Right cardiac atrium (tissue), 5 donors: ENCODE measurements at regions of chr12 and their contacts with region 1.

Region 1: DNA sequence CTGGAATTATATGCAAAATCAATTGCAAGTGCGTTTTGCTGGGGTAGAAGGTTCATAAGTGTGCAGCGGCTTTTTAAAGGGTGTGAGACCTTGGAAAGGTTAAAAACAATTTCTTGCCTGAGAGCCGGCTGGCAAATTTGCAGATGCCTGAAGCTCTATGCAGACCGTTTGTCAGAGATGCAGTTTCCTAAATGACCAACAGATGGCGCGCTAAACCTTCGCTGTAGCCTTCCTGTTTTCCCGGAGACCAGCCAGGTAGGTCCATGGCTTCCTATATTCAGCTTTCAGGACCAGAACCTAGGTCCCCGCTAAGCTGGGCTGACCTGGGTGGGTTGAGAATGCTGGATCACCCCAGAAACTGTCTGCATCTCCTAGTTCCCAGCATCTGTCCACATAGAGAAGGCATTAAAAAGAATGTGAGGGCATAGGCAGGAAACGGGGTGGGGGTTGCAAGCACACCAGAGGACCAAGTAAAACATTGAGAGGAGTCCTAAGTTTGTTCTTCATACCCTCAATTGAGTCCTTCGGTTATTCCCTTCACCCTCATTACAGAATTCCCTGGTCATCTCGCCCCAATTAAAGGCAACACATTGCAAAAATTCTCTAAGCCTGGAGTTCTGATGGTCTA is 5.7 kb upstream of the NOS1 start:
- DNase-seq: peak; percentile 44 to 74 (median 57)
- ATAC-seq: peak; percentile 59 to 71
- H3K4me3 ChIP-seq: no peak overlapping the region
- H3K27ac ChIP-seq: no peak overlapping the region
- H3K4me1 ChIP-seq: no peaks in the 10 kb centered on the region
- H3K27me3 ChIP-seq: no peaks in the 10 kb centered on the region

Region 2: DNA sequence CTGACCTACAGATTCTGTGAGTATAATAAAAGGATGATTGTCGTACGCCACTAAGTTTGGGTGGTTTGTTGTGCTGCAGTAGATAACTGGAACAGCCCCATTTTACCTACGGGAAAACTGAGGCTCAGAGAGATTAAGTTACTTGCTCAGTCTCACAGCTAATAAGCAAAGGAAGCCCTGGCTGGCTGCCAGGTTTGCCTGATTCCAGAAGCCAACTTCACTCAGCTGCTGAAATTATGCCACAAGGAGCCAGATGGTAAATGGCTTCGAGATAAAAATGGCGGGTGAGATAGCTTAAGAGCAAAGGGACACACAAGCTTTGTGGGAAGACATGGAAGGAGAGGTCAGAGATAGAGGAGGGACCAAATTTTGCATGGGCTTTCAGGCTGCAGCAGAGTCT is 185.8 kb after region 1 on chr12:
- intact Hi-C with region 1: no loop called
- DNase-seq: peak in 1 of 3 donors; percentile 66
- ATAC-seq: no peak
- H3K4me3 ChIP-seq: no peak overlapping the region
- H3K27ac ChIP-seq: no peak overlapping the region
- H3K4me1 ChIP-seq: no peaks in the 10 kb centered on the region
- H3K27me3 ChIP-seq: no peaks in the 10 kb centered on the region

Region 3: GRCh38 chr12:117574655-117575054 is 207.5 kb after region 1 on chr12:
- intact Hi-C with region 1: loop called in 1 of 4 experiments (anchors 5 kb)
- DNase-seq: no peak
- ATAC-seq: no peak
- H3K4me3 ChIP-seq: no peak overlapping the region
- H3K27ac ChIP-seq: no peak overlapping the region
- H3K4me1 ChIP-seq: no peaks in the 10 kb centered on the region
- H3K27me3 ChIP-seq: no peaks in the 10 kb centered on the region

Region 4: DNA sequence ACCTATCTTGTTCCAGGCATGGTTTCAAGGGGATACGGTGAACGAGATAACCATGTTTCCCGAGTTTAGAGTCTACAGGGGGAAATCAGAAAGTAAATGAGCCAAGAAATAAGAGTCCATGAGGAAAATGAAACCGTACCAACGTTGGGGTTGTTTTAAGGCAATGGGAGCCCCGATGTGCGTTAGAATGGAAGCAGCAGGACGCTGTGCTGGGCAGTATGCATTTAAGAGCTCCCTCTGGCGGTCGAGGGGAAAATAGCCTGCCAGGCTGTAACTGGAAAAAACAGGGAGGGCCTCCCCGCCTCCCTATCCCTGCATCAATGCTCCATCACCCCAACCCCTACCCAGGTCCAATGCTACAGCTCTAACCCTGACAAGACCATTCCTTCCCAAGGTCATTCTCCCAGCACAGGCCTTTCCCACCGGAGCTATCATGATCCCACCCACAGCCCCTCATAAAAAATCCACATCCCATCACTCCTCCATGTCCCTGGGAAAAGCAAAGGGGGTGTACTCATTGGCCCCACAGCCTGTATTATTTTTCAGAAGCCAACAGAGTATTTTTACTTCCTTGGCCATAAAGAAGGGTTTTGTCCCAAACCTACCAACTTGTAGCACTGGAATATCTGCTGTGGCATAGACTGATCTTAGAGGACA is 220.6 kb after region 1 on chr12:
- intact Hi-C with region 1: loop called in 3 of 4 experiments (anchors 1 to 5 kb)
- DNase-seq: peak; percentile 32 to 76 (median 73)
- ATAC-seq: peak; percentile 51 to 79
- H3K4me3 ChIP-seq: no peak overlapping the region
- H3K27ac ChIP-seq: no peak overlapping the region
- H3K4me1 ChIP-seq: no peaks in the 10 kb centered on the region
- H3K27me3 ChIP-seq: no peaks in the 10 kb centered on the region

Region 5: DNA sequence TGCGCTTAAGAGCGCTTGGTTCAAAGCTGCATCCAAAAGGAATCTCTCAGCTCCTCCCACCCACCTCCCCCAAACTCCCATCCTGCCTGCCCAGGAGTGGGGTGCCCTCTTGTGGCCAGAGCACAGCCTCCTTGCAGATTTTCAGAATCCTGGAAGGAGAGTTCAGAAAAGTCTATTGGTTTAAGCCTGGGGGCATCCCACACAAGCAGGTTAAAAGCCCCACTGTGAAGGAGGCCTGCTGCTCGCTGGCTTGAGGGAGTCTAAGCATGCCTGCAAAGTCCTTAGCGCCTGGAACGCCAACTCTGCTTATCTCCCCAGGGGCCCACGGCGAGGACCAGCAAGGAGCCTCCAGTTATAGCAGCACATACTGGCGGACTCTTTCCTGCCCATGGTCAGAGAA is 304.6 kb after region 1 on chr12:
- intact Hi-C with region 1: loop called in 2 of 4 experiments (anchors 10 kb)
- DNase-seq: peak; percentile 23 to 64 (median 43)
- ATAC-seq: no peak
- H3K4me3 ChIP-seq: no peak overlapping the region
- H3K27ac ChIP-seq: no peak overlapping the region
- H3K4me1 ChIP-seq: no peaks in the 10 kb centered on the region
- H3K27me3 ChIP-seq: no peaks in the 10 kb centered on the region

Region 6: GRCh38 chr12:117836999-117837736 is 470.0 kb after region 1 on chr12:
- intact Hi-C with region 1: loop called in 3 of 4 experiments (anchors 5 kb)
- DNase-seq: peak; percentile 67 to 88 (median 86)
- ATAC-seq: peak; percentile 51 to 69
- H3K4me3 ChIP-seq: no peak overlapping the region
- H3K27ac ChIP-seq: no peak overlapping the region
- H3K4me1 ChIP-seq: no peaks in the 10 kb centered on the region
- H3K27me3 ChIP-seq: no peaks in the 10 kb centered on the region